IMR-90 (cell line): ENCODE measurements at regions of chr2 and their contacts with region 1.

Region 1: GRCh38 chr2:191202881-191203397 is 42.3 kb upstream of the MYO1B start:
- DNase-seq: peak; percentile 83
- ATAC-seq: peak; percentile 59
- H3K4me3 ChIP-seq: no peak overlapping the region
- H3K27ac ChIP-seq: peak overlapping the region; percentile 100
- H3K4me1 ChIP-seq: peaks cover 11% of the 10 kb centered on the region
- H3K27me3 ChIP-seq: no peaks in the 10 kb centered on the region
- CTCF ChIP-seq: no peak
- POLR2A ChIP-seq: no peak
- RAD21 ChIP-seq: no peak

Region 2: GRCh38 chr2:191171708-191172355 is 31.1 kb before region 1 on chr2:
- CTCF ChIA-PET with region 1: no interaction called
- POLR2A ChIA-PET with region 1: no interaction called
- dilution Hi-C with region 1: no loop called
- in situ Hi-C with region 1: no loop called
- intact Hi-C with region 1: loop called (anchors 1 kb)
- DNase-seq: peak; percentile 97
- ATAC-seq: peak; percentile 83
- H3K4me3 ChIP-seq: no peak overlapping the region
- H3K27ac ChIP-seq: peak overlapping the region; percentile 57; the same call in 1 of the 2 replicates
- H3K4me1 ChIP-seq: peaks cover 23% of the 10 kb centered on the region
- H3K27me3 ChIP-seq: no peaks in the 10 kb centered on the region
- CTCF ChIP-seq: no peak
- POLR2A ChIP-seq: no peak
- RAD21 ChIP-seq: no peak